ENCODE measurements at regions of chr11 and their contacts with region 1.

Region 1: DNA sequence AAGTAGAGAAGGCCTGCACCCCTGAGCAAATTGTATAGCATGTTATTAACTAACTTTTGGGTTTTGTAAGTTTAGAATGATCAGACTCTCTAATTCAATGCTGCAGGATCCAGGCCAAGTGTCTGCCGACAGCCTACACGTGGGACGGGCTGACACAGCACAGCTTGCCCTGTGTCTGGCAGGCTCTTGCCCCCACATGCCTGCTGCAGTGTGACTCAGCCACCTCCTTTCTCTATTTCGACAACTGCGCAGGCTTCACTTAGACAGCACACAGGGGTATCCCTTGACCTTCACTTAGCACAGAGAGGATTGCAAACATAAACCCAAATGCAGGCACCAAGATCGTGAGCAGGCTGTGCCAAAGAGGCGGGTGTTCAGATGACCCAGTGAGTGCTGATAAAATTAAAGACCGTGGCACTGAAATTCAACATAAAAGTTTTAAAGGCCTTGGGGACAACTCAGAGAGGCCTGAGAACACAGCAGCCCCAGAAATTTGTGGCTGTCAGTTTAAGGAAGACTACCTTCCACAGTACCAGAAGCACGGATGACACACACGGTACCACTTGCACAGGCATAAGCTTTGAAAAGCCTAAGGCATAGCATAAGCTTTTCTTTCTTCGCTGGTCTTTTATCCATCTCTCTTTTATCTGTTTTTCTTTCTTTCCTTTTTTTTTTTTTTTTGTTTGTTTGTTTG is 37.8 kb downstream of the SCN3B start:
- DNase-seq: peak; percentile 86
- ATAC-seq: peak; percentile 100
- H3K4me3 ChIP-seq: no peak overlapping the region
- H3K27ac ChIP-seq: peak overlapping the region; percentile 4; the same call in 1 of the 2 replicates
- H3K4me1 ChIP-seq: peaks cover 3% of the 10 kb centered on the region
- H3K27me3 ChIP-seq: no peaks in the 10 kb centered on the region
- CTCF ChIP-seq: no peak
- POLR2A ChIP-seq: no peak
- RAD21 ChIP-seq: no peak

Region 2: GRCh38 chr11:123570939-123571580 is 45.6 kb before region 1 on chr11:
- CTCF ChIA-PET with region 1: no interaction called
- POLR2A ChIA-PET with region 1: no interaction called
- dilution Hi-C with region 1: no loop called
- in situ Hi-C with region 1: loop called (anchors 5 kb)
- intact Hi-C with region 1: no loop called
- DNase-seq: no peak
- ATAC-seq: no peak
- H3K4me3 ChIP-seq: no peak overlapping the region
- H3K27ac ChIP-seq: no peak overlapping the region
- H3K4me1 ChIP-seq: no peaks in the 10 kb centered on the region
- H3K27me3 ChIP-seq: no peaks in the 10 kb centered on the region
- CTCF ChIP-seq: no peak
- POLR2A ChIP-seq: no peak
- RAD21 ChIP-seq: no peak

Region 3: GRCh38 chr11:123601136-123601535 is 15.5 kb before region 1 on chr11:
- CTCF ChIA-PET with region 1: interaction called, 3 read pairs
- POLR2A ChIA-PET with region 1: no interaction called
- dilution Hi-C with region 1: no loop called
- in situ Hi-C with region 1: no loop called
- intact Hi-C with region 1: loop called (anchors 1 kb)
- DNase-seq: peak; percentile 73
- ATAC-seq: peak; percentile 91
- H3K4me3 ChIP-seq: no peak overlapping the region
- H3K27ac ChIP-seq: peak overlapping the region; percentile 43; the same call in 1 of the 2 replicates
- H3K4me1 ChIP-seq: peaks cover 8% of the 10 kb centered on the region
- H3K27me3 ChIP-seq: no peaks in the 10 kb centered on the region
- CTCF ChIP-seq: no peak
- POLR2A ChIP-seq: no peak
- RAD21 ChIP-seq: no peak

Region 4: DNA sequence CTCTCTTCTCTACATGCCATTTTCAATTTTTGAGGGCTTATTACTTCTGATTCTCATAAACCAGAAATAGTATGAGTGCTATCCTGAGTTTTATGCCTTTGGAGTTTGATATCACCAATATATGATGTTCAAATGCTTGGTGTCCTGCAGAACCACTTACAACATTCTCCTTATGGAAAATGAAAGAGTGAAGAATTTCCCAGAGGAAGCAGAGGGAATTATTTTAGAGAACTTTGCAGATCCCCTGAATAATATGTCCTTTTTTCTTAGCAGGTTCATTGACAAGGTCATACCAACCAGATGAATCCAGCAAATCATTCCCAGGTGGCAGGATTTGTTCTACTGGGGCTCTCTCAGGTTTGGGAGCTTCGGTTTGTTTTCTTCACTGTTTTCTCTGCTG is 322.7 kb after region 1 on chr11 and contains the start of gene OR4D5:
- CTCF ChIA-PET with region 1: no interaction called
- POLR2A ChIA-PET with region 1: no interaction called
- dilution Hi-C with region 1: no loop called
- in situ Hi-C with region 1: no loop called
- intact Hi-C with region 1: no loop called
- DNase-seq: no peak
- ATAC-seq: no peak
- H3K4me3 ChIP-seq: no peak within 1 kb of the TSS
- H3K27ac ChIP-seq: no peak within 1 kb of the TSS
- H3K4me1 ChIP-seq: no peaks in the 10 kb centered on the region
- H3K27me3 ChIP-seq: no peaks in the 10 kb centered on the region
- CTCF ChIP-seq: no peak
- POLR2A ChIP-seq: no peak
- RAD21 ChIP-seq: no peak
- total RNA-seq, gene OR4D5: not detected in 2 replicates